SK-N-SH (cell line): ENCODE measurements at regions of chr22 and their contacts with region 1.

Region 1: DNA sequence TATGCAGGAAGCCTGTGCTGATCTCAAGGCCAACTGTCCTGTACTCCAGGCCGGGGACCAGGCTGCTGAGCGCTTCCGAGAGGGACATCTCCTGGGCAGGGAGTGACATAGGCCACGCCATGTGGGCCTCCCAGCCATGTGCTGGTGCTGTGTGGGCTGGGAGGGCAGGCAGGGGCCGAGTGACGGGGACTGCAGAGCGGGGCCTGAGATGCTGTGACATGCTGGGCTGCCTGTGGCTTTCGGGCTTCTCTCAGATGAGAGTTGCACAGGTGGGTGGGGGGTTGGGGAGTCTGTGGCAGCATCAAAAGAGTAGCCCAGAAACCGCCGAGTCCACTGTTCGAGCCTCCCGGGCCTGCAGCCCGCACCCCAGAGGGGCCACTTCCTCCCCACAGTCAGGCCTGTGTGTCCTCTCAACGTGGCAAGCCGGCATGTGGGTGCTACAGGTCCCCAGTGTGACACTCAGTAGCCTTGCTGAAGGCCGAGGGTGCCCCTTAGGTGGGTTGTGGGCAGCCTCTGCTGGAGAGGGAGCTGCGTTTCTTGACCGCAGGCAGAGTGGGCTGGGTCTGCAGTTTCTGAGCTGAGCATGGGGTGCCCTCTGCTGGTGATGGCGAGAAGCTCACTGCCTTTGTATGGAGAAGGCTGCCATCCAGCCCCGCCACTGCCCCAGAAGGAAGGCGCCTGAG is 101.2 kb downstream of the BCR start:
- DNase-seq: peak; percentile 93
- H3K4me3 ChIP-seq: peak overlapping the region in 1 of 2 experiments; percentile 47; a peak in 1 of 4 replicates
- H3K27ac ChIP-seq: peak overlapping the region; percentile 43 to 59; a peak in 3 of 4 replicates
- H3K4me1 ChIP-seq: peaks cover 6 to 14% of the 10 kb centered on the region in 2 experiments; a peak in 3 of 4 replicates
- H3K27me3 ChIP-seq: no peaks in the 10 kb centered on the region
- CTCF ChIP-seq: peak; percentile 86
- EP300 ChIP-seq: no peak
- RAD21 ChIP-seq: peak; percentile 99

Region 2: DNA sequence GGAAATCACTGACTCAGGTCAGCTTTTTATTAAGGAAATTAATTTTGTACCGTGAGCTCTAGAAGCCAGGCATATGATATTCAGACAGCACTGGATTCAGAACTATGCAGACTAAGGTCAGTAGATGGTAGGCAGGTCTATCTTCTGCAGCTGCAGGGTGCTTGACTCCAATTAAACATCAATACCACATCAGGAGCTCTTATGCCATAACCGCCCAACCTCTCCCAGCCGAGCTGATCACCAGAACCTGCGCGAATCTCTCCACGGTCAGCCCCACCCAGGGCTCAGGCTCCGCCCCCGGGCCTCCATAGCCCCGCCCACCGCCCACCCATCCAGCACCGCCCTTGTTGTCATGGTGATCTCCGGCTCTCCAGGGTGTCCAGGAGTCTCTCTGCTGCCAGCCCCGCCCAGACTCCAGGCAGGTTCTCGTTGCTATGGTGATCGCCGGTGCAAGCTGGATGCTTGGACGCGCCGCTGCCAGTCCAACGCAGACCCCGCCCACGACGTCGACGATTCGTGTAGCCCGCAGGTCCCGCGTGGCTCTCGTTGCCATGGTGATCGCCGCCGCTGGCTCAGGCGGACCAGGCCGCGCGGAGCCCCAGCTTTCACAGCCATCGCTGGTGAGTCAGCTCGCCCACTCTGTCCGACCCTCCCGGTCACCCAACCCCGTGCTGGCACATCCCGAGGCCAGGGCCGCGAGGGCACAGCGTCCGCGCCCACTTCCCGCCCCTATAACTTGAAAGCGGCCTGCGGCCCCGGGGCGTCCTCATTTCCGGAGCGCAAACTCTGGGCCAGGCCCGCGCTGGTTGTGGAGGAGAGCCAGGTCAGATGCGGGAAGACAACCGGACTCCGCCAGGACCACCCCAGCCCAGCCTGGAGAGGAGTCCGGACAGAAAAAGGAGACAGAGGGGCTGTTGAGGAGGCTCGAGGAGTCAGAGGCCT is 136.3 kb before region 1 on chr22 and contains the start of gene RAB36:
- CTCF ChIA-PET with region 1: interaction called, 10 read pairs
- POLR2A ChIA-PET with region 1: no interaction called
- DNase-seq: peak; percentile 98
- H3K4me3 ChIP-seq: peak within 1 kb of the TSS; percentile 73 to 79
- H3K27ac ChIP-seq: peak within 1 kb of the TSS; percentile 62 to 73
- H3K4me1 ChIP-seq: peaks cover 6 to 17% of the 10 kb centered on the region in 2 experiments; a peak in 1 of 4 replicates
- H3K27me3 ChIP-seq: no peaks in the 10 kb centered on the region
- CTCF ChIP-seq: no peak
- EP300 ChIP-seq: no peak
- RAD21 ChIP-seq: no peak
- polyA plus RNA-seq, gene RAB36: 6.6 and 6.8 TPM in 2 replicates

Region 3: GRCh38 chr22:23178512-23179254 is 102.9 kb before region 1 on chr22:
- CTCF ChIA-PET with region 1: interaction called, 587 read pairs
- POLR2A ChIA-PET with region 1: interaction called, 5 read pairs
- DNase-seq: peak; percentile 91
- H3K4me3 ChIP-seq: no peak overlapping the region; a peak in 1 of 4 replicates
- H3K27ac ChIP-seq: no peak overlapping the region
- H3K4me1 ChIP-seq: peaks cover 12 to 41% of the 10 kb centered on the region in 2 experiments
- H3K27me3 ChIP-seq: no peaks in the 10 kb centered on the region
- CTCF ChIP-seq: peak; percentile 96
- EP300 ChIP-seq: no peak
- RAD21 ChIP-seq: peak; percentile 98

Region 4: GRCh38 chr22:23207729-23208393 is 73.7 kb before region 1 on chr22:
- CTCF ChIA-PET with region 1: interaction called, 13 read pairs
- POLR2A ChIA-PET with region 1: no interaction called
- DNase-seq: no peak
- H3K4me3 ChIP-seq: no peak overlapping the region
- H3K27ac ChIP-seq: peak overlapping the region in 1 of 2 experiments; percentile 6; a peak in 1 of 4 replicates
- H3K4me1 ChIP-seq: peaks cover 0 to 46% of the 10 kb centered on the region in 2 experiments; a peak in 1 of 4 replicates
- H3K27me3 ChIP-seq: no peaks in the 10 kb centered on the region
- CTCF ChIP-seq: no peak
- EP300 ChIP-seq: no peak
- RAD21 ChIP-seq: no peak

Region 5: GRCh38 chr22:23225724-23226496 is 55.6 kb before region 1 on chr22:
- CTCF ChIA-PET with region 1: interaction called, 22 read pairs
- POLR2A ChIA-PET with region 1: no interaction called
- DNase-seq: no peak
- H3K4me3 ChIP-seq: no peak overlapping the region
- H3K27ac ChIP-seq: peak overlapping the region; percentile 34 to 98
- H3K4me1 ChIP-seq: peaks cover 19 to 55% of the 10 kb centered on the region in 2 experiments; a peak in 3 of 4 replicates
- H3K27me3 ChIP-seq: no peaks in the 10 kb centered on the region
- CTCF ChIP-seq: no peak
- EP300 ChIP-seq: no peak
- RAD21 ChIP-seq: no peak

Region 6: DNA sequence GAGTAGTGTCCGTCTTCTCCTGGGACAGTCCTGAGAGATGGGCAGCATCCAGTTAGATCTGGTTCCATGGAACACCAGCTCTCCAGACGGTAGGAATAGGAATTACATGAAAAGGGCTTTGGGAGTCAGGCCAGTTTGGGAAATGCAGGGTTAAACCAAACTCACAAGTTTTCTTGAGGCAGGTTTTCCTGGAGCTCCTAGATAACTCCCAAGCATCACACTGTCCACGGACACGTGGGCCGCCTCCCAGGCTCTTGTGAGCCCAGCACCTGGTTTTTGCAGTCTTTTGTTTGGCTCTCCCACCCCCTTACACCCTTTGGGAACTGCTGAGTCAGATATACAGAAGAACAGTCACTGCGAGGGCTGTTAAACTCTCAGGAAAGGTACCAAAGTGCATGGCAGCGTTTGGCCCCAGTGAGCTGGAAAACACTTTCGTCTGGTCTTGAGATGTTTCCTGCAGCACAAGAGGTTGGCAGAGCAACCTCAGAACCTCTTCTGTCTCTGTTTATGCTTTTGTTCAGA is 11.3 kb before region 1 on chr22:
- CTCF ChIA-PET with region 1: interaction called, 64 read pairs
- POLR2A ChIA-PET with region 1: no interaction called
- DNase-seq: no peak
- H3K4me3 ChIP-seq: no peak overlapping the region
- H3K27ac ChIP-seq: no peak overlapping the region
- H3K4me1 ChIP-seq: peaks cover 0 to 27% of the 10 kb centered on the region in 2 experiments; a peak in 1 of 4 replicates
- H3K27me3 ChIP-seq: no peaks in the 10 kb centered on the region
- CTCF ChIP-seq: no peak
- EP300 ChIP-seq: no peak
- RAD21 ChIP-seq: no peak